ENCODE measurements at regions of chr10 and their contacts with region 1.

Region 1: GRCh38 chr10:118300320-118300719 is 41.8 kb downstream of the FAM204A start:
- DNase-seq: no peak
- H3K4me3 ChIP-seq: no peak overlapping the region
- H3K27ac ChIP-seq: no peak overlapping the region
- H3K4me1 ChIP-seq: no peaks in the 10 kb centered on the region
- H3K27me3 ChIP-seq: peaks cover 0 to under 1% of the 10 kb centered on the region in 2 donors
- CTCF ChIP-seq: no peak
- POLR2A ChIP-seq: no peak

Region 2: GRCh38 chr10:118373786-118374185 is 73.5 kb after region 1 on chr10:
- intact Hi-C with region 1: no loop called
- DNase-seq: no peak
- H3K4me3 ChIP-seq: no peak overlapping the region
- H3K27ac ChIP-seq: no peak overlapping the region
- H3K4me1 ChIP-seq: no peaks in the 10 kb centered on the region
- H3K27me3 ChIP-seq: no peaks in the 10 kb centered on the region
- CTCF ChIP-seq: no peak
- POLR2A ChIP-seq: no peak

Region 3: GRCh38 chr10:119368991-119369869 is 1068.9 kb after region 1 on chr10:
- intact Hi-C with region 1: no loop called
- DNase-seq: no peak
- H3K4me3 ChIP-seq: no peak overlapping the region
- H3K27ac ChIP-seq: peak overlapping the region; percentile 78 to 91
- H3K4me1 ChIP-seq: peaks cover 0 to 3% of the 10 kb centered on the region in 2 donors
- H3K27me3 ChIP-seq: no peaks in the 10 kb centered on the region
- CTCF ChIP-seq: no peak
- POLR2A ChIP-seq: no peak

Region 4: GRCh38 chr10:119521443-119522204 is 1221.3 kb after region 1 on chr10:
- intact Hi-C with region 1: loop called (anchors 5 kb)
- DNase-seq: no peak
- H3K4me3 ChIP-seq: no peak overlapping the region
- H3K27ac ChIP-seq: no peak overlapping the region
- H3K4me1 ChIP-seq: no peaks in the 10 kb centered on the region
- H3K27me3 ChIP-seq: no peaks in the 10 kb centered on the region
- CTCF ChIP-seq: no peak
- POLR2A ChIP-seq: no peak

Measured in breast epithelium (tissue), 4 donors.